ENCODE measurements at regions of chr1 and their contacts with region 1.

Region 1: DNA sequence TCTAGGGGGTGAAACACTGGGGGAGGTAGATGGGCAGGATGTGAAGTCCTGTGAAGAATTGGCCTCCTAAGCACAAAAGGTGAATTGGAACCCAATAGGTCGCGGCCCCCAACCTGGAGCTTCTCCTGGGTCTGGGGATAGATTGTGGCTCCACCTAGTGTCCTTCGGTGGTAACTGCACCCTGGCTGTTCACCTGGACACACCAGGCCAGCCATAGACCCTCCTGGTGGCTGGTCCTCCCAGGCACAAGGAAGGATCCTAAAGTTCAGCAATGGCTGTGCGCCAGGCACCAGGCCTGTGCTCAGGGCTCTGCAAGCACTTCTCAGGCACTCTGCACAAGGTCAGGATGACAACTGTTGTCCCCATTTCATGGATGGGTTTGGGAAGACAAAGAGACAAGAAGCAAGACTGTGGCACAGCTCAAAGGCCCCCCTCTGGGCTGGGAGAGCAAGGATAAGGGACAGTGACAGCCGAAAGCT is 13.5 kb downstream of the ESPN start:
- DNase-seq: peak; percentile 74
- H3K4me3 Mint-ChIP-seq: no peak overlapping the region
- H3K27ac Mint-ChIP-seq: no peak overlapping the region
- H3K4me1 Mint-ChIP-seq: peaks cover 7% of the 10 kb centered on the region
- H3K27me3 Mint-ChIP-seq: peaks cover 30% of the 10 kb centered on the region

Region 2: DNA sequence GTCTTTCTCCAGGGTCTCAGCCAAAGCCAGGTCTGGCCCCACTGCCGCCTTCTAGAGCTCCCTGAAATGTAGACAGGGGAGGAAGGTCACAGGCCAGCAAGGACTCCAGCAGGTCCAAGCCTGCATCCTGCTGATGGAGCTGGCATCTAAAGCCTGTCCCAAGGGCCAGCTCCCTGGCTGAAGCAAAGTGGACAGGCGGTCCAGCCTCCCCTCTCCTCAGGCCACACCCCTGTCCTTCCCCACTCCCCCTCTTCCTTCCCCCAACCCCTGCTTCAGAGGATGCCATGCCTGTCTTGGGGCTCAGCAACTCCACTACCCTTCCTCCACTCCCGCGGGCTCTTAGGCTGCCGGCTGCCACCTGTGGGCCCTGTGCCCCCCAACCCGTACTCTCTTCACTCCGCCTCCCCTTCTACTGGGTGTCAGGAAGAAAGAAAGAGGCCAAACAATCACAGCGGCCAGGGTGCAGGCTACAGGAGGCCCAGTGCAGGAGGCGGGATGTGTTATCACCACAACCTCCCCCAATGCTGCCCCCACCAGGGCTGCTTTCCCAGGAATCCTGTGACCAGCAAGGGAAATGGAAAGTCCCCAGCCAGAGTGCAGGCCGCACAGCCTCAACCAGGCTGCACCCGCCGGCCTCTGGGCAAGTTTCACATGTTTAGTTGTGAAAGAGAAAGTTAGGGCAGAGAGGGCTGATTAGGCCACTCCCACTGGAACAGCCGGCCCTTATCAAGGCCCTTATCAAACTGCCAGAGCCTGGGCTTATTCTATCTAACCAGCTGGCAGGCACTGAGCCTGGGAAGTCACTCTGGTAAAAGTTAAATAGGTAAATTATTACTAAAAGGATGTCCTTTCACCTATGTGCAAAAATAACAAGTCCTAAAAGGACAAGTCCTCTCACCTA is 78.6 kb before region 1 on chr1:
- CTCF ChIA-PET with region 1: interaction called, 10 read pairs
- POLR2A ChIA-PET with region 1: interaction called, 3 read pairs
- DNase-seq: peak; percentile 72
- H3K4me3 Mint-ChIP-seq: peak overlapping the region; percentile 58
- H3K27ac Mint-ChIP-seq: peak overlapping the region; percentile 85
- H3K4me1 Mint-ChIP-seq: peaks cover 44% of the 10 kb centered on the region
- H3K27me3 Mint-ChIP-seq: no peaks in the 10 kb centered on the region

Region 3: DNA sequence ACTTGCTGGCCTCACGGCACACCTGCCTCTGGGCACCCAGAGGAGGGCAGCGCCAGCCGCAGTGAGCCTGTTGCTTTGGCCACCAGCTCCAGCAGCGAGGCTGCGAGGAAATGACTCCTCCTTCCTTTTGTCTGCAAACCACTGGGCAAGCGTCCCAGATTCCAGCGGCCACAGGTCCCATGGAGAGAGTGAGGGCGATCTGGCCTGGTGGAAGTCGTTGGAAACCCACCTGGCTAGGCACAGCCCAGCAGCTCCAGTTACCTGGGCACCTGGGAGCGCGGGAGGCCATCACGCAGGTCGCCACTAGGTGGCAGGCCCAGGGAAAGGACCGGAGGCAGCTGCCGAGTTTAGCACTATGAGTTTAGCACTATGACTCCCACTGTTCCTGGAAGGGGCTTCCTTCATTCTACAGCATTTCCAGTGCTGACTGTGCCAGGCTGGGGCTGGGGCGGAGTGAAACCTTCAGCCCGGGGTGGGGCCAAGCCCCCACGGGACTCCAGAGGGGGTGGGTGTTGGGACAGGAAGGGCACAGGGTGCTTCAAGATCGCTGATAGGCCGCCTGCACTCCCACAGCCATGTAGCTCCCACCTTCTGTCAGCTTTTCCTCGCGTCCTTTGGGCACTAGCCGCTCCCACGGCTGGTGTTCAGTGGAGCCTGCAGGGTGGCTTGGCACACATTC is 14.6 kb before region 1 on chr1:
- CTCF ChIA-PET with region 1: interaction called, 108 read pairs
- POLR2A ChIA-PET with region 1: interaction called, 7 read pairs
- DNase-seq: peak; percentile 71
- H3K4me3 Mint-ChIP-seq: no peak overlapping the region
- H3K27ac Mint-ChIP-seq: no peak overlapping the region
- H3K4me1 Mint-ChIP-seq: peaks cover 35% of the 10 kb centered on the region
- H3K27me3 Mint-ChIP-seq: peaks cover 49% of the 10 kb centered on the region

Region 4: DNA sequence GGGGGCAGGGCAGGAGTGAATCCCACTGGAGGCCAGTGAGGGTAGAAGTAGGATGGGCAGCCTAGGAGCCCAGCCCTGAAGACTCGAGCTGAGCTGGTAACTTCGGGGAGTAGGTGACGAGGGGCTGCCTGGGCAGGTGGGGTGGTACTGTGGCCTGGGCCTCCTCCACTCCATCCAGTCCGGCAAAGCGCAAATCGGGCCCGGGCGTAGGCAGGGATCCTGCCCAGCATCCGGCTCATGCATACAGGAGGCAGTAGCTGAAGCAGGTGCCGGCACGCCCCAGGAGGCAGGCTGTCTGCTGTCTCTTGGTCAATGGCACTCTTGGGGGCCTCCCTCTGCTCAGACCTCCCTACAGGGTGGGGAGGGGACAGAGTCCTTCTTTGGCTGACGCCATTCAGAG is 29.1 kb after region 1 on chr1:
- CTCF ChIA-PET with region 1: interaction called, 10 read pairs
- POLR2A ChIA-PET with region 1: interaction called, 3 read pairs
- DNase-seq: no peak
- H3K4me3 Mint-ChIP-seq: no peak overlapping the region
- H3K27ac Mint-ChIP-seq: no peak overlapping the region
- H3K4me1 Mint-ChIP-seq: peaks cover 23% of the 10 kb centered on the region
- H3K27me3 Mint-ChIP-seq: no peaks in the 10 kb centered on the region

Region 5: DNA sequence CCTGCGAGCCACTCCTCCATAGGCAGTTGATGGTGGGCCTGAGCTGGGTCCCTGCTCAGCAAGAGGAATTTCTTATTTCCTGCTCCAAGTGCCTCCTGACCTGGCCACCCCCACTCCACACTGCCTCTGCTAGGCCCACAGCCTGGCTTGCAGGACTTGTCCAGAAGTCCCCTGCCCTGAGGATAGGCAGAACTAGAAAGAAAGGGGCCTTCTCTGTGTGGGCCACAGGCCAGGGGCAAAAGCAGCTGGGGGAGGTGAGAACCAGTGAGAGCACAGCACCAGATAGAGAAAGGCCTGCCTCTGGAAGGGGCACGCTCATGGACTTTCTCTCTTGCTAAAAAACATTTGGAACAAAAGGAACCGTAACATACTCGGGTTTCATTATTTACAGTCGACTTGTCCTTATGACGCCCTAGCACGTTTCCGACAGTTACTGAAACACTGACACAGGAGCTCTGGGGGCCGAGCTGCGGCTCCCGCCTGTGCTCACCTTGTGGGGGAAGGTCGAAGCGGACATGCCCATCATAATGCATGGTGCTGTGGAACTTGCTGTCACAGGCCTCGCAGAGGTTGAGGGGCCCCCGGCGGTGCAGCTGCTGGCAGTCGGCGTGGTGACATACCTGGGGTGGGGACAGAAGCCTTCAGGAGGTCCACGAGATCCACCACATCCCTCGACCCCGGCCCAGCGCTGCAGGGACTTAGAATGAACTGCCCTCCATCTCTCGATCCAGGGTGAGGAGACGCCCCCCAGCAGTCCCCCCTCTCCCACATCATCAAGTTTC is 39.1 kb after region 1 on chr1:
- CTCF ChIA-PET with region 1: interaction called, 15 read pairs
- POLR2A ChIA-PET with region 1: no interaction called
- DNase-seq: no peak
- H3K4me3 Mint-ChIP-seq: no peak overlapping the region
- H3K27ac Mint-ChIP-seq: no peak overlapping the region
- H3K4me1 Mint-ChIP-seq: no peaks in the 10 kb centered on the region
- H3K27me3 Mint-ChIP-seq: no peaks in the 10 kb centered on the region

Region 6: GRCh38 chr1:6535214-6535613 is 97.1 kb after region 1 on chr1:
- CTCF ChIA-PET with region 1: no interaction called
- POLR2A ChIA-PET with region 1: no interaction called
- DNase-seq: no peak
- H3K4me3 Mint-ChIP-seq: no peak overlapping the region
- H3K27ac Mint-ChIP-seq: peak overlapping the region; percentile 55
- H3K4me1 Mint-ChIP-seq: peaks cover 2% of the 10 kb centered on the region
- H3K27me3 Mint-ChIP-seq: no peaks in the 10 kb centered on the region

Measured in activated CD4-positive, alpha-beta memory T cell treated with anti-CD3 and anti-CD28 coated beads, Interleukin-2, amount 10 ng/mL, durations not matched to agents 7 days and 5 days (primary cell).